ENCODE measurements at regions of chr5 and their contacts with region 1.

Region 1: GRCh38 chr5:171639966-171640365 is 145.7 kb upstream of the SMIM23 start:
- DNase-seq: no peak
- H3K4me3 ChIP-seq: no peak overlapping the region
- CTCF ChIP-seq: no peak

Region 2: GRCh38 chr5:171543148-171543815 is 96.7 kb before region 1 on chr5:
- in situ Hi-C with region 1: no loop called
- DNase-seq: no peak
- H3K4me3 ChIP-seq: no peak overlapping the region
- CTCF ChIP-seq: no peak

Region 3: DNA sequence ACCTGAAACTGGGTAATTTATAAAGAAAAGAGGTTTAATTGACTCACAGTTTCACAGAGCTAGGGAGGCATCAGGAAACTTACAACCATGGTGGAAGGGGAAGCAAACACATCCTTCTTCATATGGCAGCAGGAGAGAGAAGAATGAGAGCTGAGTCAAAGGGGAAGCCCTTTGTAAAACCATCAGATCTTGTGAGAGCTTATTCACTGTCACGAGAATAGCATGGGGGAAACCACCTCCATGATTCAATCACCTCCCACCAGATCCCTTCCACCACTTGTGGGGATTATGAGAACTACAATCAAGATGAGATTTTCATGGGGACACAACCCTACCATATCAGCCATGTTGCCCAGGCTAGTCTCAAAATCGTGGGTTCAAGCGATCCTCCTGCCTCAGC is 77.1 kb before region 1 on chr5:
- in situ Hi-C with region 1: no loop called
- DNase-seq: no peak
- H3K4me3 ChIP-seq: no peak overlapping the region
- CTCF ChIP-seq: no peak

Region 4: GRCh38 chr5:171592737-171593136 is 47.2 kb before region 1 on chr5:
- in situ Hi-C with region 1: loop called (anchors 5 kb)
- DNase-seq: no peak
- H3K4me3 ChIP-seq: no peak overlapping the region
- CTCF ChIP-seq: no peak

Region 5: GRCh38 chr5:171681677-171682076 is 41.7 kb after region 1 on chr5:
- in situ Hi-C with region 1: no loop called
- DNase-seq: no peak
- H3K4me3 ChIP-seq: no peak overlapping the region
- CTCF ChIP-seq: no peak

Region 6: GRCh38 chr5:171709918-171710317 is 70.0 kb after region 1 on chr5:
- in situ Hi-C with region 1: loop called (anchors 5 kb)
- DNase-seq: no peak
- H3K4me3 ChIP-seq: no peak overlapping the region
- CTCF ChIP-seq: no peak